RWPE1 (cell line): ENCODE measurements at regions of chr20 and their contacts with region 1.

Region 1: GRCh38 chr20:50663095-50663850 is 28.1 kb downstream of the RIPOR3 start:
- DNase-seq: peak; percentile 83
- H3K27ac ChIP-seq: no peak overlapping the region
- CTCF ChIP-seq: no peak; the same call in 1 of the 2 replicates

Region 2: GRCh38 chr20:50724851-50725721 is 61.8 kb after region 1 on chr20:
- CTCF ChIA-PET with region 1: interaction called, 10 read pairs
- POLR2A ChIA-PET with region 1: no interaction called
- DNase-seq: peak; percentile 93
- H3K27ac ChIP-seq: peak overlapping the region; percentile 74
- CTCF ChIP-seq: no peak

Region 3: GRCh38 chr20:50744143-50744792 is 81.0 kb after region 1 on chr20:
- CTCF ChIA-PET with region 1: interaction called, 21 read pairs
- POLR2A ChIA-PET with region 1: no interaction called
- DNase-seq: peak; percentile 96
- H3K27ac ChIP-seq: peak overlapping the region; percentile 80
- CTCF ChIP-seq: peak; percentile 76